Endothelial cell of umbilical vein (primary cell): ENCODE measurements at regions of chr14 and their contacts with region 1.

Region 1: GRCh38 chr14:53953002-53953827 is 3.4 kb downstream of the BMP4 start:
- DNase-seq: peak; percentile 94
- H3K4me3 ChIP-seq: peak overlapping the region; percentile 77 to 99 (median 86)
- H3K27ac ChIP-seq: peak overlapping the region; percentile 73
- H3K4me1 ChIP-seq: peaks cover 35% of the 10 kb centered on the region
- H3K27me3 ChIP-seq: no peaks in the 10 kb centered on the region
- CTCF ChIP-seq: no peak
- POLR2A ChIP-seq: peak; percentile 99

Region 2: GRCh38 chr14:53539489-53540126 is 413.6 kb before region 1 on chr14:
- CTCF ChIA-PET with region 1: interaction called, 29 read pairs
- POLR2A ChIA-PET with region 1: interaction called, 4 read pairs
- dilution Hi-C with region 1: no loop called
- intact Hi-C with region 1: loop called (anchors 1 kb)
- DNase-seq: peak; percentile 94
- H3K4me3 ChIP-seq: no peak overlapping the region
- H3K27ac ChIP-seq: no peak overlapping the region
- H3K4me1 ChIP-seq: peaks cover 43% of the 10 kb centered on the region
- H3K27me3 ChIP-seq: no peaks in the 10 kb centered on the region
- CTCF ChIP-seq: peak; percentile 74 to 82
- POLR2A ChIP-seq: no peak

Region 3: DNA sequence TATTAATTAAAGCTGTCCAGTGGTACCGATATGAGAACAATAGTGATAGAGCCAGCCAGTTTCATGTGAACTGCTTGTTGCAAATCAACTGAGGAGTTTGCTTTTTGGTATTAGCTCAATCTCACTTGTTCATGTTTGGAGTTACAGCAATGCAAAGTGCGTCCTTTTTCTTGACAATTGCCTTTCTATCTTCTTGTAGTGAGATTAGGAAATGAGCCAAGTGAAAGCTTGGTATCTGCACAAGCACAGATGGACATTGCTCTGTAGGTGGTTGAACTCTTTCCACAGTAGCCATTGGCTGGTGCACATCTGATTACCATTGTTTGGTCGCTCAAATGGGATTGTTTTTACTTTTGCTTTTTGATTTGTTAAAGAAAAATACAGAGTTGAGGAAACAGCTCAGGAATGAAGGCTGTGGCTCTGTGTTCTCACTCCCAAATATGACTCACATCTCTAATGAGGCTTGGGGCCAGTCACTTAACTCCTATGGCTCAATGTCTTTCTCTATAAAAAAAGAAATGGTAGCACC is 238.0 kb before region 1 on chr14:
- CTCF ChIA-PET with region 1: interaction called, 21 read pairs
- POLR2A ChIA-PET with region 1: interaction called, 4 read pairs
- dilution Hi-C with region 1: no loop called
- intact Hi-C with region 1: loop called (anchors 2 kb)
- DNase-seq: peak; percentile 94
- H3K4me3 ChIP-seq: peak overlapping the region in 1 of 3 experiments; percentile 56
- H3K27ac ChIP-seq: peak overlapping the region; percentile 56
- H3K4me1 ChIP-seq: peaks cover 29% of the 10 kb centered on the region
- H3K27me3 ChIP-seq: no peaks in the 10 kb centered on the region
- CTCF ChIP-seq: no peak
- POLR2A ChIP-seq: peak; percentile 31

Region 4: DNA sequence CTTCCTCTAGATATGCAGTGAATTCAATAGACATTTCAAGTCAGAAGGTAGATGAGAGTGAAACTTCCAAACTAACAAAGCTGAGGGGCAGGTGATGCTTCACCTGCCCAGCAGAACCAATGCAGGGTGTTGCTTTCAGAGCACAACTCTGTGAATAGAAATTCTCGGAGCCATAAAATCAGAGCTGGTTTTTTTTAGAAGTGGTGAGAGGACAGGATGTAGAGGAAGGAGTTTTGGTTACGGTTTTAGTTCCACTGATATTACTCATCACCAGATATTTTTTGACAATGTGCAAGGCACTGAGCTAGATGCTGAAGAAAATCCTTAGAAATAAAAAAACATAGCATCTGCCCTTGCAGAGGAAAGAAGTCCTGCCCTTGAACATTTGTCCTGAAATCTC is 58.8 kb before region 1 on chr14:
- CTCF ChIA-PET with region 1: interaction called, 11 read pairs
- POLR2A ChIA-PET with region 1: interaction called, 7 read pairs
- dilution Hi-C with region 1: no loop called
- intact Hi-C with region 1: loop called (anchors 1 kb)
- DNase-seq: peak; percentile 55
- H3K4me3 ChIP-seq: no peak overlapping the region
- H3K27ac ChIP-seq: peak overlapping the region; percentile 52
- H3K4me1 ChIP-seq: peaks cover 37% of the 10 kb centered on the region
- H3K27me3 ChIP-seq: no peaks in the 10 kb centered on the region
- CTCF ChIP-seq: no peak
- POLR2A ChIP-seq: no peak

Region 5: GRCh38 chr14:54169254-54169924 is 216.2 kb after region 1 on chr14:
- CTCF ChIA-PET with region 1: interaction called, 164 read pairs
- POLR2A ChIA-PET with region 1: interaction called, 7 read pairs
- dilution Hi-C with region 1: no loop called
- intact Hi-C with region 1: loop called (anchors 1 kb)
- DNase-seq: peak; percentile 90
- H3K4me3 ChIP-seq: no peak overlapping the region
- H3K27ac ChIP-seq: peak overlapping the region; percentile 59
- H3K4me1 ChIP-seq: peaks cover 54% of the 10 kb centered on the region
- H3K27me3 ChIP-seq: no peaks in the 10 kb centered on the region
- CTCF ChIP-seq: no peak
- POLR2A ChIP-seq: no peak

Region 6: DNA sequence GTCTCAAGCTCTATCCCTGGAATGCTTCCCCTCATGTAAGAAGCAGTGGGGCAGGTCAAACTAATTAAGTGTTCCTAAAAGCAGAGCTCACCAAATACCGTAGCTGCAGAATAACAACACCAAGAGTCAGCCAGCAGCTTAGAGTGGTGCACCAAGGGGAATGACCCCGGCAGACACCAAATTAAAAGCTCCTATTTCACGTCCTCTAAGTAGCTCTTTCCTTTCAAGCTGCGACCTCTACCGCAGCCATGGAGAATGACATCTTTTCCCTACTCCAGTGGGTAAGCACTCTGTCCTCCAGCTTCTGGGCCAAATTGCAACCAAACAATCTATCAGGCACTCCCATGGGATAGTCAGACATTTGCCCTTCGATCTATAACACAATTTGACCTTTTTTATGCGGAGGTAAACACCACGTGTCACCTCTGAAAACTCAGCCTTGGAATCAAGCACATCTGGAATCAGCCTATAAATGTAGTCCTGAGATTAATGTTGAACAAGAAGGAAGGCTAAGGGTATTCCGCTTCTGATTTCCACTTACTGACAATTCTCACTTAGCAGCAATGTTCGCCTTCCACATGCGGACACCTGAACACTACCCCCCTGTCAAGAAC is 376.0 kb after region 1 on chr14:
- CTCF ChIA-PET with region 1: interaction called, 80 read pairs
- POLR2A ChIA-PET with region 1: no interaction called
- dilution Hi-C with region 1: no loop called
- intact Hi-C with region 1: loop called (anchors 1 kb)
- DNase-seq: peak; percentile 81
- H3K4me3 ChIP-seq: no peak overlapping the region
- H3K27ac ChIP-seq: peak overlapping the region; percentile 24
- H3K4me1 ChIP-seq: peaks cover 55% of the 10 kb centered on the region
- H3K27me3 ChIP-seq: no peaks in the 10 kb centered on the region
- CTCF ChIP-seq: peak; percentile 72 to 74
- POLR2A ChIP-seq: no peak